Psoas muscle (tissue), 8 donors: ENCODE measurements at regions of chr6 and their contacts with region 1.

Region 1: DNA sequence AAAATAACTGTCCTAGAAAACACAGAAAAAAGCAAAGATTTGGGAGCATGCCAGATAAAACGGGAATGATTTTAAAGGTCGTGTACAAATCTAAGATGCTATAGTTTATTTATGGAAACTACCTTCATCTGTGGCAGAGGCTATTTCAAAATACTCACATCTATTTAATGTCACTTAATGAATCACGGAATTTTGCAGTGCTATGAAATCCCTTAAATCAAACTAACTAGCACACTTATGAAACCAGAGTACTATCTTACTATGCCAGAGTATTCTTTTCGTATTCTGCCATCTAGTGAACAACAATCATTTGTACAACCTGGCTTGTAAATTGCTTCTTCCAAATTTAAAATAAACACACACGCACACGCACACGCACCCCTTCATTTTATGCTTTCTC is 77.9 kb upstream of the BMP5 start:
- DNase-seq: no peak
- ATAC-seq: peak in 3 of 4 donors; percentile 35 to 55 (median 53)
- H3K4me3 ChIP-seq: peak overlapping the region; percentile 38
- H3K27ac ChIP-seq: no peak overlapping the region
- H3K4me1 ChIP-seq: no peaks in the 10 kb centered on the region
- H3K27me3 ChIP-seq: peaks cover 0 to 3% (median 0%) of the 10 kb centered on the region in 3 donors
- CTCF ChIP-seq: peak; percentile 17

Region 2: DNA sequence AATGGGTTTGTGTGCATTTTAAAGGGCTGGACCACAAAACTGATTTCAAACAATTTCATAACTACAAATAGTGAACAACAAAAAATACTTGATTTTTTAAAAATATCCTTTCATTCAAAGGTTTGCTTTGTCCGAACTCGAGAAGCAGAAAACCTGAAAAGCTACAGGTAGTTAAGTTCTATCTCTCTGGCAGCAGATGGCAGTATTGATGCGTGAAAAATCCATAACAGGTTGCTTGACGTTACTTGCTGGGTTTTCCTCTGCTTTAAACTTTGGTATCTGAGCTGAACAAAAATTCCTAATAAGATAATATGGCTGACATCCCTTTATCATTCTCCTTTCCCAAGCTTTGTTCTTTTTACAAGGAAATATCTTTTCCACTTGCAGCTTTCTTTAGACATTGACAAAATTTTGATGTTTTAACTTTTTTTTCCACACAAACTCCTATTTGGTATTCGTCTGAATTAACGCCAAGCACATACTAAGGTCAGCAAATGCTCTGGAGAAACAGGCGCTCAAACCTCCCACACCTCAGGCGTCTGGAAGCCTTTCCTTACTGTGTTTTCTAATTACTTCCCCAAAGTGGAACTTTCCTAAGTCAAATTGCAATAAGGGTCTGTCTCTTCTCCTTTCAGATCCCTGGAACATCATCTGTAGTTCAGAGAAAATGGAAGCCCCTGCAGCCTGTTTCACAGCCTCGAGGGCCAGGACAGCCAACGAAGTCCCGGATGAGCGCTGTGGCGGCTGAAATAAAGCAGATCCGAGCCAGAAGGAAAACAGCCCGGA is 676.4 kb before region 1 on chr6:
- intact Hi-C with region 1: loop called in 1 of 2 experiments (anchors 10 kb)
- DNase-seq: peak in 1 of 2 donors; percentile 44
- ATAC-seq: peak in 1 of 4 donors; percentile 55
- H3K4me3 ChIP-seq: no peak overlapping the region
- H3K27ac ChIP-seq: no peak overlapping the region
- H3K4me1 ChIP-seq: no peaks in the 10 kb centered on the region
- H3K27me3 ChIP-seq: no peaks in the 10 kb centered on the region
- CTCF ChIP-seq: peak; percentile 44

Region 3: DNA sequence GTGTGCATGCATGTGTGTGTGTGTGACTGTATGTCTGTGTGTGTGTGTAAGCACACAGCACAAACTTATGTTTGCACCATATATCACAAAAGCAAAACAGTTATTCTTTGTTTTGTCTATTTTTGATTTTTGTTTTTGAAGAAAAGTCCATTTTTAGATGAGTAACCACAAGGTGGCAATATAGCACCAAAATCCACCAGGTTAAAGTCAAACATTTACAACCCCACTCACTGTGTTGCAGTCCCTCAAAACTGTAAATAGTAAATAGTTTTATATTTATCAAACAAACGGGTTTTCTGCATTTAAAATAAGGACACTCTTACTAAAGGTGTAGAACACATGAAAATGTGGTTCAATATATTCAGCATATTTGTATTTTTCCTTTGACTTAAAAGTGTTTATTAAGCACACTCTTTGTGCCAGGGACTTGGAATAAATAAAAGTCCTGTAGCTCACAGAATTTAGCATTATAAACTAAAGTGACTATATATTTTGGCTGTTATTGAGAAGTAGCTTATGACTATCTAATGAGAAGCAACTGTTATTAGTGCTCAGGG is 507.6 kb before region 1 on chr6:
- intact Hi-C with region 1: loop called in 1 of 2 experiments (anchors 10 kb)
- DNase-seq: no peak
- ATAC-seq: no peak
- H3K4me3 ChIP-seq: no peak overlapping the region
- H3K27ac ChIP-seq: no peak overlapping the region
- H3K4me1 ChIP-seq: no peaks in the 10 kb centered on the region
- H3K27me3 ChIP-seq: no peaks in the 10 kb centered on the region
- CTCF ChIP-seq: peak; percentile 23

Region 4: GRCh38 chr6:55726144-55726543 is 227.2 kb before region 1 on chr6:
- intact Hi-C with region 1: no loop called
- DNase-seq: no peak
- ATAC-seq: no peak
- H3K4me3 ChIP-seq: no peak overlapping the region
- H3K27ac ChIP-seq: no peak overlapping the region
- H3K4me1 ChIP-seq: no peaks in the 10 kb centered on the region
- H3K27me3 ChIP-seq: no peaks in the 10 kb centered on the region
- CTCF ChIP-seq: no peak